ENCODE measurements at regions of chr10 and their contacts with region 1.

Region 1: DNA sequence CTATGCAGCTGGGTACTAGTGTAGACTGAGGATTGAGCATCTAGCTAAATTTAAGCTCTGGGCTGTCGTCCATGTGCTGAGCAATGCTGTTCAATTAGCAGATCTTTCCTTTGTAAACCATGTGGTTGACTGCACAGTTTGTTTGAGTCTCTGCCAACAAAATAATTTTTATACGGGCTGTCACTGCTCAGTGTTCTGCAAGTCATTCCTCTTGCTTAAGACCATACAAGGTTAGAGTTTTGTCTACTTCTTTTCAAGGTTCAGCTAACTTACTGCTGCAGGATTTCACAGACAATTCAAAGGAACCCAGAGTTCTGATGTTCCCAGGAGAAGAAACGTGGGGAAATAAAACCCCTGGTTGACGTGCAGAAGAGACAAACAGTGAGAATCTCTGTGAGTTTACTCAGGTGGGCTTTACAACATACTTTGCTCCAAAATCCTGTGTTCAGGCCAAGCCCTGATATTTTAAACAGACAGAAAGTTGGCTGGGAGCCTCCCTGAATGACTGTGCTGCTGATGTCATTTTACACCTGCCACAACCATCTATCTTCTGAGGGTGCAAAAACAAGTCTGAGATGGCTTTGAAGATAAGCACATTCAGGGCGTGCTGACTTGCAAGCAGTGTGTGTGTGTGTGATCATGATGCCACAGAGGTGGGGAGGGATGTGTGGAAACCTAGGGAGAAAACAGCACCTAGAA is 177.1 kb upstream of the SVIL start:
- DNase-seq: peak; percentile 50
- H3K4me3 ChIP-seq: no peak overlapping the region
- H3K27ac ChIP-seq: peak overlapping the region; percentile 79 to 92 (median 86)
- H3K4me1 ChIP-seq: peaks cover 4 to 24% (median 16%) of the 10 kb centered on the region in 4 donors
- H3K27me3 ChIP-seq: no peaks in the 10 kb centered on the region
- CTCF ChIP-seq: no peak
- EP300 ChIP-seq: peak; percentile 89
- POLR2A ChIP-seq: no peak

Region 2: DNA sequence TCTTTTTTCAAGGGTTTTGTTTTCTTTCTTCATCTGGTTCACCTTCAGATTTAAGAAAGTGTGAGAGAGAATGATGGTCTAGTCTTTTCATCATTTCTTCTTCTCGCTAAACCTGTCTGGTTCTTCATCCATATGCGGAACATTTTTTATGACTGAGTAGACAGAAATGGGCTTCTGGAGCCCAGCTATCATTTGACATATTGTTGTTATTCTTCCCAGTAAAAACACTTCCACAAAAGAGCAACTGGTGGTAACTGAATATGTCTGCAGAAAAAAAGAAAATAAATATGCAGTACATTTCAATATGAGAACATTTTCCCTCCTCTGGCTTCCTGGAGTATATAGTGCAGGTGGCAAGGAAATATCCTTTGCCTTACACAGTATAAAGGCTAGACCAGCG is 38.0 kb after region 1 on chr10:
- in situ Hi-C with region 1: no loop called
- intact Hi-C with region 1: loop called (anchors 5 kb)
- DNase-seq: no peak
- H3K4me3 ChIP-seq: no peak overlapping the region
- H3K27ac ChIP-seq: peak overlapping the region; percentile 66 to 88 (median 78)
- H3K4me1 ChIP-seq: peaks cover 0 to 12% (median 0%) of the 10 kb centered on the region in 4 donors
- H3K27me3 ChIP-seq: no peaks in the 10 kb centered on the region
- CTCF ChIP-seq: no peak
- EP300 ChIP-seq: no peak
- POLR2A ChIP-seq: no peak

Measured in transverse colon (tissue), 4 donors.